ENCODE measurements at regions of chr12 and their contacts with region 1.

Region 1: DNA sequence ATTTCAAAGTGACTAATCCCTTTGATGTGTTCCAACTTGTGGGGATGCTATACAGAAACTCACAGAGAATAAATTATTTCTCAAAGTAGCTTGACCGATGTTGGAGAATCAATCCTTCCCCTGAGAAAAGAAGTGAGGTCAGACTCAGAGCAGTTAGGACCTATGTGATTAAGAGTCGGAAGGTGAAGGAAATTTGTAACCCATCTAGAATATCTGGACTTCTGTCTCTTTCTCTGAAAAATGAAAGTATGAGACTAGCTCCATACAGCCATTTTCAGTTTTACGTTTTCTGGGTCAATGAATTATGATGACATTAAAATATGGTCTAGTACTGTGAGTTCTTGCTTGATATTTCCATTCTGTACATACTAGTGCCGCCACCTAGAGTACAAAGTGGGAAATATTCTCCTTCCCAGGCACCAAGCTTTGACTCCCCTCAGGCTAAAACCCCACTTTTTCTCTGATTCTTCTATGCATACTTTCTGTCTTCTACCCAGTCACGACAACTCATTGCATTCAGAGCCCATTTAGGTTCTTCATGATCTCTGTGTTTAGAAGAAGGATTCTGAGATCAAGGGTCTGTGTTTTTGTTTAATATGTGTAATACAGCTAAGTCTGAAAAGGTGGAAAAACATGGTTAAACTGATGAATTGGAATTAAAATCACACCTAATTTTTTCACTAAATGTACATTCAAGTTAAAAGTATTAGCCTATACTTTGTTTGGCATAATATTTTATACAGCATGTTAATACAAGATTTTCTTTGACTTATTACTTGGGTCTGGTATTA is 6.9 kb upstream of the NTS start:
- DNase-seq: peak; percentile 35
- H3K4me3 ChIP-seq: no peak overlapping the region
- H3K27ac ChIP-seq: no peak overlapping the region
- H3K4me1 ChIP-seq: no peaks in the 10 kb centered on the region
- CTCF ChIP-seq: peak; percentile 83

Region 2: DNA sequence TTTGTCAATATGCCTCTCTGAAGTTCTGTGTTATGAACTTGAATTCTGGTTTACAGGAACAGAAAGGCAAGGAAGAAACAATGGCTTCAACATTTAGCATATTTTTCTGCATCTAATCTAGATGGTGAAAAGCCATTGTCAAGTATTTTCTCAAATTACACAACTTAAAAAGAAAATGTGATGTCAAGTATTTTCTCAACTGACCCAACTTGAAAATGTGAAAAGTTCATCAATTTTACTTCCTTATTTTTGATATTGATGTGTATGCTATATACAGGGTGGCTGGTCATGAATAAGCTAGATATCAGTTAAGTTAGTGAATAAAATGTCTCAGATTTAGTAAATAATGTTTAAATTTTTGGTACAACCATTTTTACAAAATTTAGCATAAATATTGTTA is 390.4 kb before region 1 on chr12:
- CTCF ChIA-PET with region 1: no interaction called
- POLR2A ChIA-PET with region 1: no interaction called
- intact Hi-C with region 1: loop called (anchors 5 kb)
- DNase-seq: no peak
- H3K4me3 ChIP-seq: no peak overlapping the region
- H3K27ac ChIP-seq: no peak overlapping the region
- H3K4me1 ChIP-seq: no peaks in the 10 kb centered on the region
- CTCF ChIP-seq: no peak

Region 3: GRCh38 chr12:85708775-85709174 is 158.4 kb before region 1 on chr12:
- CTCF ChIA-PET with region 1: no interaction called
- POLR2A ChIA-PET with region 1: no interaction called
- intact Hi-C with region 1: no loop called
- DNase-seq: no peak
- H3K4me3 ChIP-seq: no peak overlapping the region
- H3K27ac ChIP-seq: no peak overlapping the region
- H3K4me1 ChIP-seq: no peaks in the 10 kb centered on the region
- CTCF ChIP-seq: no peak

Region 4: DNA sequence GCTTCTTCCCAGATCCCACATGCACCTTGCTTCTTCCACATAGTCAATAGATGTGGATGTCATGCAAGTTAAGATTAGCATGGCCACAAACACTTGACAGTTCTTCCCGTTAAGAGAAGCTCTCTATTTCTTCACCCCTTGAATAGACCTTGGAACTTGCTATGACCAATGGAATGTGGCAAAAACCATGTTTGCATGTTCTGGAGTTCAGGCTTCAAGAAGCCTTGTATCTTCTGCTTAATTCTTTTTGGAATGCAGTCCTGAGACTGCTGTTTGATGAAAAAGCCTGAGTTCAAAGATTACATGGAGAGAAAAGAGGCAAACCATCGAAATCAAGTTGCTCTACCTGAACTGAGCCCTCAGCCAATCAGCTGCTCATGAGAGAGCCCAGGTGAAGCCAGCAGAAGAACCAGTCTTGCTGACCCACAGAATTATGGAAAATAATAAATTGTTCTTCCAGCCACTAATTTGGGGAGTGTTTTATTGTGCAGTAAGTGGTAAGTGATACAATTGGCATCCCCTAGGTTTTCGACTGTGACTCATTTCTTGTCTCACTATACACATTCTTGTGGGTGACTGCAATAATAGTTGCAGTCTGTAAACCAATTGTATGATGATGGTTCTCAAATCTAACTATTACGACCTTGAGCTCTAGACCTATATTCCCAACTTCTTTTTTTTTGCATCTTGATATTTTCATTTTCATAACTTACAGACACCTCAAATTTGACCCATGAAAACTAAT is 43.6 kb before region 1 on chr12:
- CTCF ChIA-PET with region 1: no interaction called
- POLR2A ChIA-PET with region 1: no interaction called
- intact Hi-C with region 1: no loop called
- DNase-seq: no peak
- H3K4me3 ChIP-seq: no peak overlapping the region
- H3K27ac ChIP-seq: no peak overlapping the region
- H3K4me1 ChIP-seq: no peaks in the 10 kb centered on the region
- CTCF ChIP-seq: no peak

Measured in OCI-LY7 (cell line).